CD4-positive, alpha-beta memory T cell (primary cell): ENCODE measurements at regions of chr12 and their contacts with region 1.

Region 1: DNA sequence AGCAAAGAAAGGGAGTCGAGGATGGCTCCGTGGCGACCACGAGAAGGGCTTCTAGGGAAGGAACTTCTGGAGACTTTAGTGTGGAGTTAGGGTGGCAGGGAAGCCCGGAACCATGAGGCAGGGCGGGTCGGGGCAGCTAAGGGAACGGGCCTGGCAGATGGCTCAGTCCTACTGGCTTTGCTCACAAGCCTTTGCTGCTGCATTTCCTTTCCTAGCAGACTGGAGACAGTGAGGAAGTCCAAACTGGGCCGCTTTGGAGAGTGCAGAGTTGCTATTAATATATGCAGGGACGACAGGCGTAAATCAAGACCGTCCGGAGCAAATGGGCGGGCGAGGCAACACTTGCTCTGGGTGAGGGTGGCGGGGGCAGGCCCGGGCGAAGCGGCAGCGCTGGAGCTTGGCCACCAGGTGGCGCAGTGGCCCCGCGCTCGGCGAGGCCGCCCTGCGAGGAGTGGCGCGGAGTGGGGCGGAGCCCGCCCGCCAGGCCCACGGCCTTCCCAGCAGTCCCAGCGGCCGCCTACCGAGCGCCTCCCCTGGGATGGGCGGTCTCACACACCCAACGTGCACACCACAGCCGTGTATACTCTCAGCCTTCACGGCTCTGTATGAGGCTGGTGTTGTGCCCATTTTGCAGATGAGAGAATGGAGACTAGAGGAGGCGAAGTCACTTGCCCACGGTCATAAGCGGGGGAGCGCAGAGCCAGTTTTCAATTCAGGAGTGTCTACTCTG is 24.4 kb upstream of the LRTM2 start:
- DNase-seq: peak; percentile 93 to 95 (median 94)
- H3K4me3 ChIP-seq: peak overlapping the region; percentile 38 to 96
- H3K4me3 Mint-ChIP-seq: peak overlapping the region; percentile 91 to 96 (median 92)
- H3K27ac ChIP-seq: peak overlapping the region; percentile 82
- H3K27ac Mint-ChIP-seq: peak overlapping the region; percentile 89 to 98 (median 92)
- H3K4me1 ChIP-seq: peaks cover 15% of the 10 kb centered on the region
- H3K4me1 Mint-ChIP-seq: peaks cover 15 to 32% (median 22%) of the 10 kb centered on the region in 4 donors
- H3K27me3 ChIP-seq: no peaks in the 10 kb centered on the region
- H3K27me3 Mint-ChIP-seq: no peaks in the 10 kb centered on the region

Region 2: GRCh38 chr12:1634590-1635191 is 161.3 kb before region 1 on chr12:
- CTCF ChIA-PET with region 1: interaction called, 38 read pairs
- POLR2A ChIA-PET with region 1: no interaction called
- intact Hi-C with region 1: loop called (anchors 1 kb)
- DNase-seq: peak in 4 of 5 donors; percentile 36 to 46 (median 40)
- H3K4me3 ChIP-seq: no peak overlapping the region
- H3K4me3 Mint-ChIP-seq: no peak overlapping the region
- H3K27ac ChIP-seq: no peak overlapping the region
- H3K27ac Mint-ChIP-seq: no peak overlapping the region
- H3K4me1 ChIP-seq: peaks cover 12% of the 10 kb centered on the region
- H3K4me1 Mint-ChIP-seq: peaks cover 5 to 15% (median 12%) of the 10 kb centered on the region in 4 donors
- H3K27me3 ChIP-seq: peaks cover 17% of the 10 kb centered on the region
- H3K27me3 Mint-ChIP-seq: peaks cover 27 to 39% of the 10 kb centered on the region in 2 donors

Region 3: DNA sequence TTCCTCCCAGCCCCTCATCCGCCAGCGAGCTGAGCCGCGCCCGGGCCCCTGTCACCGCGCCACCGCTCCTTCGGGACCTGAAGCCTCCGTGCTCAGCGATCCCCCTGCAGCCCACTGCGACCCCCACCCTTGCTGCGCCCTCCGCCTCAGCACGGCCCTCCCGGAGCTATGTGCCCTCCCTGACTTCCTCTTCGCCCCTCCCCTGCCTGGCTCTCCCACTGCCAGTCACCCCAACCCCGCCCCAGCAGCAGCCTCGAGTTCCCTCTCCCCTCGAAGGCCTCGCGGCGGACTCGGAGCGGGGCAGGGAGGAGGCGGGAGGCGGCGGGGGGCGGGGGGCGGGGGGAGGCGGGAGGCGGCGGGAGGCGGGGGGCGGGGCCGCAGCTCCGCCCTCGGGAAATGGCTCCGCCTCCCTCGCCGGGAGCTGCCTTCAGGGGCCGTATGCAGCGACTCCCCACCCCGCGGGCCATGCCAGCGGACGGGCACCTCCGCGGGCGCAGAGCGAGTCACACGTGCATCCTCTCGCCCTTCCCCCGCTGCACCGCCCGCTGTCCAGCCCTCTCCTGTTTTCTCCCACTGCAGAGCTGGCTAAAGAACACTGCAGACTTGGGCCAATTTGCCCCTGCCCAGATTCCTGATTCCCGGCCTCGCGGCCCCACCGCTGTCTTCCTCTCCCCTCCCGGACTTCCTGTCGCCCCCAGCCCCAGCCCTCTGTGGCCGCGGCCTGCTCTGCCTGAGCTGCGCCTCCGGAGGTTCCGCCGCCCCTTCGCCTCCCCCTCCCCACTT is 134.2 kb before region 1 on chr12:
- CTCF ChIA-PET with region 1: interaction called, 612 read pairs
- POLR2A ChIA-PET with region 1: interaction called, 57 read pairs
- intact Hi-C with region 1: loop called (anchors 1 kb)
- DNase-seq: peak; percentile 84 to 92 (median 90)
- H3K4me3 ChIP-seq: peak overlapping the region in 1 of 2 donors; percentile 49
- H3K4me3 Mint-ChIP-seq: peak overlapping the region; percentile 72 to 84 (median 82)
- H3K27ac ChIP-seq: no peak overlapping the region
- H3K27ac Mint-ChIP-seq: peak overlapping the region; percentile 88 to 93 (median 91)
- H3K4me1 ChIP-seq: peaks cover 16% of the 10 kb centered on the region
- H3K4me1 Mint-ChIP-seq: peaks cover 22 to 55% (median 29%) of the 10 kb centered on the region in 4 donors
- H3K27me3 ChIP-seq: no peaks in the 10 kb centered on the region
- H3K27me3 Mint-ChIP-seq: no peaks in the 10 kb centered on the region

Region 4: DNA sequence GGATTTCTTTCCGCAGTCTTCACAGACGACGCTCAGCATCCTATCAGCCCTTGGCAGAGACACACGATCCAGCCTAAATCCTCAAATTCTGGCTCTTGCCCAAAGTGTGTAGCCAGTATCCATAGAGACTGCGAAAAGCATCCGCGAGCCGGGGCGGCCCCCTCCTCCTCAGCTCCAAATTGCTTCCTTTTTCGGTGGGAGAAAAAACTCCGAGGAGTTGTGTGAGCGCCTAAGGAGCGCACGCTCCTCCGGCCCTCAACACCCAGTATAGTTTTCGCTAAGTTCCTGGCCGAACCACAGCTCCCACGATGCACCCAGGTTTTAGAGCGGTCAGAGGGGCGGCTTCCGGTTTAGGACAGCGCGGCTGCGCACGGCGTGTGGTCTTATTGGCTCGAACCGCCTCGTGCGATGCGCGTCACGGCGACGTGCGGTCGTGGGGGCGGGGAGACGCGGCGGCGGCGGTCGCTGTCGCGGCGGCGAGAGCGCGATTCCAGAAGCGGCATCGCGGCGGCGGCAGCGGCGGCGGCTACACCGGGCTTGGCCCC is 105.3 kb before region 1 on chr12 and contains the start of gene ADIPOR2:
- CTCF ChIA-PET with region 1: interaction called, 15 read pairs
- POLR2A ChIA-PET with region 1: interaction called, 13 read pairs
- intact Hi-C with region 1: loop called (anchors 1 kb)
- DNase-seq: peak; percentile 93 to 95 (median 94)
- H3K4me3 ChIP-seq: peak within 1 kb of the TSS; percentile 70 to 87
- H3K4me3 Mint-ChIP-seq: peak within 1 kb of the TSS; percentile 88 to 97 (median 93)
- H3K27ac ChIP-seq: peak within 1 kb of the TSS; percentile 73
- H3K27ac Mint-ChIP-seq: peak within 1 kb of the TSS; percentile 96 to 99 (median 99)
- H3K4me1 ChIP-seq: peaks cover 27% of the 10 kb centered on the region
- H3K4me1 Mint-ChIP-seq: peaks cover 26 to 53% (median 35%) of the 10 kb centered on the region in 4 donors
- H3K27me3 ChIP-seq: no peaks in the 10 kb centered on the region
- H3K27me3 Mint-ChIP-seq: peaks cover 0 to 1% of the 10 kb centered on the region in 2 donors
- total RNA-seq, gene ADIPOR2: 35.7 to 36.2 TPM

Region 5: DNA sequence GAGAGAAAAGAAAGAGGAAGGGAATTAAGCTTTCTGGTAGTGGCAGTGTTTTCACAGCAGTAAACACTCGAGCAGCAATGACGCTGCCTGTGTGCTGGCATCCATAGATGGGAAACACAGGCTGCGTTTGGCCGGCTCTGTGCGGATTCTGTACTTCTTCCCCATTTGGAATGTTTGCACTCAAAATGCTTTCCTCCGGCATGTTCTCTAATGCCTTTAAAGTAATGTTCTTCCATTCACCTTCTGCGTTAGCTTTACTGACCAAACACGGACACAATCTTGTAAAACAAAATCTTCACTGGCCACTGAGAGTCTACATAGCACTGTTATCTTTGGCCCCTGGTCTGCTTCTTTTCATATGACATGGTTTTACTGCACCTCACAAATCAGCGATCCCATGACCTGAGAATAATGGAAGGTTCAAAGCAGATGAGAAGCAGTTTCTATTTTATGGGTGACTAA is 176.9 kb after region 1 on chr12:
- CTCF ChIA-PET with region 1: no interaction called
- POLR2A ChIA-PET with region 1: no interaction called
- intact Hi-C with region 1: no loop called
- DNase-seq: no peak
- H3K4me3 ChIP-seq: no peak overlapping the region
- H3K4me3 Mint-ChIP-seq: no peak overlapping the region
- H3K27ac ChIP-seq: no peak overlapping the region
- H3K27ac Mint-ChIP-seq: no peak overlapping the region
- H3K4me1 ChIP-seq: no peaks in the 10 kb centered on the region
- H3K4me1 Mint-ChIP-seq: peaks cover 0 to 14% (median 8%) of the 10 kb centered on the region in 4 donors
- H3K27me3 ChIP-seq: no peaks in the 10 kb centered on the region
- H3K27me3 Mint-ChIP-seq: no peaks in the 10 kb centered on the region

Region 6: GRCh38 chr12:2004113-2004929 is 208.4 kb after region 1 on chr12 and contains the start of gene DCP1B:
- CTCF ChIA-PET with region 1: interaction called, 3 read pairs
- POLR2A ChIA-PET with region 1: interaction called, 5 read pairs
- intact Hi-C with region 1: loop called (anchors 1 kb)
- DNase-seq: peak; percentile 89 to 95 (median 93)
- H3K4me3 ChIP-seq: peak within 1 kb of the TSS; percentile 77 to 97
- H3K4me3 Mint-ChIP-seq: peak within 1 kb of the TSS; percentile 92 to 99 (median 98)
- H3K27ac ChIP-seq: peak within 1 kb of the TSS; percentile 90
- H3K27ac Mint-ChIP-seq: peak within 1 kb of the TSS; percentile 92 to 99 (median 99)
- H3K4me1 ChIP-seq: peaks cover 30% of the 10 kb centered on the region
- H3K4me1 Mint-ChIP-seq: peaks cover 22 to 40% (median 32%) of the 10 kb centered on the region in 4 donors
- H3K27me3 ChIP-seq: no peaks in the 10 kb centered on the region
- H3K27me3 Mint-ChIP-seq: peaks cover 0 to 2% of the 10 kb centered on the region in 2 donors
- total RNA-seq, gene DCP1B: 25.5 to 26.9 TPM

Region 7: DNA sequence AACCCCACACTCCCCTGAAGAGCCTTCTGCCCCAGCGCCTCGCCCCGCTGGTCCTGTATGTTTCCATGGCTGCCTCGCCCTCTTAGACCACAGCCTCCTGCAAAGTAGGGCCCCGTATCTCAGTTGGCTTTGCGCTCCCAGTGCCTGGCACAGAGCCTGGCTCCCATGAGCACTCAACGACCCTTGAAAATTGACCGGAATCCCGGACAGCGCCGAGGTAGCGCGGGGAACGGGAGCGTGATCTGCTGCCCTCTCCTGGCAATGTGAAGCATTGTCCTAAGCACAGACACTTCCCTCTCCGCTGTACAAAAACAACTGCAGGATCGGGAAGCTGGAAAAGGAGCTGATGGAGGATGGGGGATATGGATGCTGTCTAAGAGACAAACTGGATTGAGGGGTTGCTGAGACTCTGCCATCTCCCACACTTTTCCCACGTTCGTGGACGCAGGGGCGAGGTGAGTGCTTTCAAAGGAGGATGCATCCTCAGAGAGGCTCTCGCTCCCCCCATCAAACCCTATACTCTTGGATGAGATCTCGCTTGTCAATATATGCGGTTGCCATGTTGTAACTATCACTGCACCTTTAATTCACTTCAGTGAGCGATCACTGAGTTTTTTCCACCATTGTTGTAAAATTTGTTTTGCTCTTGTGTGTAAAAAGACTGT is 988.1 kb after region 1 on chr12:
- CTCF ChIA-PET with region 1: no interaction called
- POLR2A ChIA-PET with region 1: no interaction called
- intact Hi-C with region 1: loop called (anchors 10 kb)
- DNase-seq: peak; percentile 38 to 51 (median 45)
- H3K4me3 ChIP-seq: no peak overlapping the region
- H3K4me3 Mint-ChIP-seq: peak overlapping the region; percentile 70 to 92 (median 83)
- H3K27ac ChIP-seq: no peak overlapping the region
- H3K27ac Mint-ChIP-seq: peak overlapping the region in 3 of 7 donors; percentile 53 to 79 (median 55)
- H3K4me1 ChIP-seq: peaks cover 9% of the 10 kb centered on the region
- H3K4me1 Mint-ChIP-seq: peaks cover 9 to 13% (median 11%) of the 10 kb centered on the region in 4 donors
- H3K27me3 ChIP-seq: no peaks in the 10 kb centered on the region
- H3K27me3 Mint-ChIP-seq: peaks cover 9 to 17% of the 10 kb centered on the region in 2 donors